Heart right ventricle (tissue), 16 donors: ENCODE measurements at regions of chr3 and their contacts with region 1.

Region 1: DNA sequence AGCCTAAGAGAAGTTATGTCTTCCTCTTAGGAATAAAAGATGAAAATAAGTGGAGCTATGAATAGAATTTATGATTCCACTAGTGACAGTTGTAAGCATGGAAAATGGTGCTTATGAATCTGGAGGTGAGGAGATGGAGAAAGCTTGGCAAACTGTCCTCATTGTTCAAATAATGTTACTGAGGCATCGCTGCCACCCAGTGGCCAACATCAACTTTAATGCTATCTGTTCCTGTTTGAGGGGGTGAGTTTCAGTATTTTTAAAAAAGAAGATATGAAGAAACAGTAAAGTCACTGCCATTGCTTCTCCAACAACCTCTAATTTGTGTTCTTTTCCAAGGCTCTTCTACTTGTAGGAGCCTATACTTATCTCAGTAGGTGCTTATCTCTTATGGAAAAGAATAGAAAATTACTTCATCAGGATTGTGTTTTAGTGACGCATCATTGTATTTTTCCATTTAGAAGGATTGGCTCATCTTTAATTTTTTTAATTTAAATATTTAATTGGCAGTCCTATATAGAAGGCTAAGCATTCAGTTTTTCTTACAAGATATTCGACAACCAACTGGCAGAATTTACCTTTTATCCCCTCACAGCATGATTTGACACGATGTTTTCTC is 260.4 kb upstream of the P2RY1 start:
- DNase-seq: peak; percentile 48 to 62
- ATAC-seq: peak in 7 of 8 donors; percentile 71 to 92 (median 83)
- H3K4me3 ChIP-seq: no peak overlapping the region
- H3K27ac ChIP-seq: no peak overlapping the region
- H3K4me1 ChIP-seq: peaks cover 0 to 26% (median 0%) of the 10 kb centered on the region in 9 donors
- H3K27me3 ChIP-seq: no peaks in the 10 kb centered on the region
- CTCF ChIP-seq: peak; percentile 29 to 76 (median 64)

Region 2: GRCh38 chr3:152071924-152072323 is 502.6 kb before region 1 on chr3:
- intact Hi-C with region 1: loop called in 1 of 10 experiments (anchors 10 kb)
- DNase-seq: no peak
- ATAC-seq: peak in 4 of 8 donors; percentile 58 to 75 (median 60)
- H3K4me3 ChIP-seq: no peak overlapping the region
- H3K27ac ChIP-seq: no peak overlapping the region
- H3K4me1 ChIP-seq: peaks cover 0 to 7% (median 0%) of the 10 kb centered on the region in 9 donors
- H3K27me3 ChIP-seq: no peaks in the 10 kb centered on the region
- CTCF ChIP-seq: peak in 8 of 9 donors; percentile 12 to 66 (median 56)

Region 3: GRCh38 chr3:152183473-152183872 is 391.1 kb before region 1 on chr3:
- intact Hi-C with region 1: loop called in 1 of 10 experiments (anchors 10 kb)
- DNase-seq: peak in 1 of 2 donors; percentile 54
- ATAC-seq: peak in 6 of 8 donors; percentile 29 to 79 (median 75)
- H3K4me3 ChIP-seq: no peak overlapping the region
- H3K27ac ChIP-seq: no peak overlapping the region
- H3K4me1 ChIP-seq: peaks cover 0 to 6% (median 0%) of the 10 kb centered on the region in 9 donors
- H3K27me3 ChIP-seq: no peaks in the 10 kb centered on the region
- CTCF ChIP-seq: peak; percentile 20 to 77 (median 68)

Region 4: DNA sequence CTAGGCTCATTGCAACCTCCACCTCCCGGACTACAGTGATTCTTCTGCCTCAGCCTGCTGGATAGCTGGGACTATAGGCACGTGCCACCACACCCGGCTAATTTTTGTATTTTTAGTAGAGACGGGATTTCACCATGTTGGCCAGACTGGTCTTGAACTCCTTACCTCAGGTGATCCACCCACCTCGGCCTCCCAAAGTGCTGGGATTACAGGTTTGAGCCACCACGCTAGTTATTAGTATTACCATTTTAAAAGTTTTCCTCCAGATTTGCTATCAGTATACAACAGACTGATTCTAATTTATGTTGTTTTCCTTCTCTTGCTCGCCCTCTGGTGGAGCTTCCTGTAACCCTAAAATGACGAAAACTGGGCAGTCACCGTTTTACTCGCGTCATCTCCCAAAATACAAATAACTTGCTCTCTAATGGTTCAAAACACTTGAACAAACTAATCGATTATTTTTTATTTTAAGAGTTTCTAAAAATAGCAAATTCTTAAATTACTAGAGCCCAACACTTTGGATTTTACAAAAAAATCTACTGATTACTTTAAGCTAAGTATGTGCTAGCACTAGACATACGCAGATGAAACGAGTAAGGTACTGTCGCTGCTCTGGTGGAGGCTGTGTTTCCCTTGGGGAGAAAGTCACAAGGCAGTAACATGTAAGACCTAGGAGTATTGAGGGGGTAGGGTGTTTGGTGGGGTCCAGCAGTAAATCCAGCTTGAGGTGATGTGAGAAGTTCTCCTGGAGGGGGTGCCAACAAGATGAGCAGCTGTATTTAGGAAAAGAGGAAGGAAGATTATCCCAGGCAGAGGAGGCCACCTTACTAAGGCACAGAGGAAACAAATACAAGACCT is 102.5 kb before region 1 on chr3:
- intact Hi-C with region 1: loop called in 8 of 10 experiments (anchors 2 to 10 kb)
- DNase-seq: peak in 1 of 2 donors; percentile 80
- ATAC-seq: peak; percentile 69 to 89 (median 78)
- H3K4me3 ChIP-seq: peak overlapping the region in 6 of 10 donors; percentile 20 to 40 (median 32)
- H3K27ac ChIP-seq: peak overlapping the region in 2 of 10 donors; percentile 3 to 35
- H3K4me1 ChIP-seq: peaks cover 0 to 5% (median 0%) of the 10 kb centered on the region in 9 donors
- H3K27me3 ChIP-seq: no peaks in the 10 kb centered on the region
- CTCF ChIP-seq: peak; percentile 53 to 88 (median 75)

Region 5: DNA sequence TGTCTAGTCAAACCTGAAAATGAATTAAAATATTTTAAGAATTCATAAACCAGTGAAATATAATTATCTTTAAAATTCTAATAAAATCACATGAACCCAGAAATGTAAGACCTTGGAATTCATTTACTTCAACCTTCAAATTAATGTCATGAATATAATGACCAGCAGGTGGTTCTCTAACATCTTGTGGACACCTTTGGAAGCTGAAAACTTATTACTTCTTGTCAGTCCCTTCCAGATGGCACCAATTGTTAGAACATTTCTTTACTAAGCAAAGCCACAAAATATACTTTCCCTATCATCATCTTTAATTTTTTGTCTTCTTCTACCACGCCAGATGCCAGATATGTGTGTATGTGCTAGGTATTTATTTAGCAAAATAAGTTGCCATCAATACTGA is 65.9 kb before region 1 on chr3:
- intact Hi-C with region 1: loop called (anchors 1 to 10 kb)
- DNase-seq: no peak
- ATAC-seq: peak in 2 of 8 donors; percentile 55
- H3K4me3 ChIP-seq: no peak overlapping the region
- H3K27ac ChIP-seq: no peak overlapping the region
- H3K4me1 ChIP-seq: peaks cover 0 to 3% (median 0%) of the 10 kb centered on the region in 9 donors
- H3K27me3 ChIP-seq: no peaks in the 10 kb centered on the region
- CTCF ChIP-seq: peak; percentile 16 to 68 (median 52)

Region 6: GRCh38 chr3:152524198-152525140 is 50.1 kb before region 1 on chr3:
- intact Hi-C with region 1: loop called in 2 of 10 experiments (anchors 2 to 5 kb)
- DNase-seq: peak in 1 of 2 donors; percentile 59
- ATAC-seq: no peak
- H3K4me3 ChIP-seq: no peak overlapping the region
- H3K27ac ChIP-seq: no peak overlapping the region
- H3K4me1 ChIP-seq: peaks cover 0 to 3% (median 0%) of the 10 kb centered on the region in 9 donors
- H3K27me3 ChIP-seq: no peaks in the 10 kb centered on the region
- CTCF ChIP-seq: peak; percentile 60 to 92 (median 86)

Region 7: DNA sequence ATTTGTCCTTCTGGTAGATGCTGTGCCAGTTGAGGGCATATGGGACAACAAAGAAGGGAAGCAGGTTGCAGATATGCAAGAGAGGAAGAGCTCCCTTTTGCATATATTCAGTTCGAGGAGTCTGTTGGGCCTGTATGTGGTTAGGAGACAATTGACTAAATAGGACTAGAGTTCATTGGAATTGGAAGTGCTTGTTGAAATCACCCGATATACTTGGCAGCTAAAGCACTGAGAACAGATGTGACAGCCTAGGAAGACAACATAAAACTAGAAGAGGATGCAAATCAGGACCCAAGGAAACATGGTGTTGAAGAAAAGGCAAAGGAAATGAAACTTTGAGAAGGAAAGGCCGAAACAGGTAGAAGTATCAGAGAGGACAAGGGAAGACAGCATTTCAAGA is 45.1 kb after region 1 on chr3:
- intact Hi-C with region 1: loop called in 1 of 10 experiments (anchors 1 kb)
- DNase-seq: no peak
- ATAC-seq: no peak
- H3K4me3 ChIP-seq: no peak overlapping the region
- H3K27ac ChIP-seq: peak overlapping the region in 5 of 10 donors; percentile 19 to 63 (median 51)
- H3K4me1 ChIP-seq: peaks cover 0 to 32% (median 7%) of the 10 kb centered on the region in 9 donors
- H3K27me3 ChIP-seq: no peaks in the 10 kb centered on the region
- CTCF ChIP-seq: no peak